ENCODE measurements at regions of chr1 and their contacts with region 1.

Region 1: GRCh38 chr1:235866913-235867845 is 473 bp upstream of the LYST start:
- DNase-seq: peak; percentile 95 to 100 (median 99)
- H3K4me3 ChIP-seq: peak overlapping the region; percentile 72 to 86
- H3K4me3 Mint-ChIP-seq: peak overlapping the region; percentile 77 to 99 (median 96)
- H3K27ac ChIP-seq: peak overlapping the region; percentile 100
- H3K27ac Mint-ChIP-seq: peak overlapping the region; percentile 98 to 100 (median 99)
- H3K4me1 ChIP-seq: peaks cover 31% of the 10 kb centered on the region
- H3K4me1 Mint-ChIP-seq: peaks cover 26 to 60% (median 40%) of the 10 kb centered on the region in 4 donors
- H3K27me3 ChIP-seq: no peaks in the 10 kb centered on the region
- H3K27me3 Mint-ChIP-seq: no peaks in the 10 kb centered on the region

Region 2: DNA sequence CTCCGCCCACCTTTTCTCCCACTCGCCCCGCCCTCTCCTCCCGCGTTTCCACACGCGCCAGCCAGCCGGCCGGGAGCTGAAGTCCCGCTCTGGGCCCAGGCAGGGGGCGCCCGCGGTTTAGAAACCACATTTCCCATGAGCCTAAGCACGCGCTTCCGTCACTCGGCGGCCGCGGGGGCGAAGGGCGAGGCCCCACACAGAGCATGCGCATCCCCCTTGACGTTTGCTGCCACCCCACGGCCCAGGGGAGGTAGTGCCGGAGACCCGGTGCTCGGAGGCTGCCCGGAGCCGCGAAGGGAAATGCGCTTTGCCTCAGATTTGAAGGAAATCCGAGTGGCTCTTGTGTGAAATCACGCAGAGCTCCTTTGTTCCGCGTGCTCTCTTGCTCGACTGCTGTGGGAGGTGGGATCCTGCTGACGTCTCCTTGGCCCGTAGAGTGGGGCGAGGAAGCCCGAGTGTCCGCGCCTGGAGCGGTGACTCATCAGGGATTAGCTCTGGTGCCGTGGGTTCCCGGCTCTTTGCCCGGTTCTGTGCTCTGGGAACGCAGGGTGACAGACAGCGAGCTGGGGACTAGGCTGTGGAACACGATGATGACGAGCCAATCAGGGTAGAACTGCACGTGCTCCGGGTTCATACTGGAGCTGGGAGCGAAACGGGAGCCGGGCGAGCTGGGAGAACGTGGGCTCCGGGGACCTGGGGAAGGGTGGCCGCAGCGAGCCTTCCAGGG is 362.5 kb before region 1 on chr1:
- CTCF ChIA-PET with region 1: interaction called, 4 read pairs
- POLR2A ChIA-PET with region 1: interaction called, 14 read pairs
- intact Hi-C with region 1: loop called (anchors 2 kb)
- DNase-seq: peak; percentile 97 to 99 (median 98)
- H3K4me3 ChIP-seq: peak overlapping the region; percentile 74
- H3K4me3 Mint-ChIP-seq: peak overlapping the region; percentile 92 to 98 (median 96)
- H3K27ac ChIP-seq: peak overlapping the region; percentile 85
- H3K27ac Mint-ChIP-seq: peak overlapping the region; percentile 97 to 100 (median 98)
- H3K4me1 ChIP-seq: peaks cover 20% of the 10 kb centered on the region
- H3K4me1 Mint-ChIP-seq: peaks cover 12 to 32% (median 19%) of the 10 kb centered on the region in 4 donors
- H3K27me3 ChIP-seq: no peaks in the 10 kb centered on the region
- H3K27me3 Mint-ChIP-seq: peaks cover 0 to 1% of the 10 kb centered on the region in 2 donors

Region 3: GRCh38 chr1:235843461-235843961 is 23.7 kb before region 1 on chr1:
- CTCF ChIA-PET with region 1: interaction called, 5 read pairs
- POLR2A ChIA-PET with region 1: interaction called, 16 read pairs
- intact Hi-C with region 1: no loop called
- DNase-seq: peak in 1 of 5 donors; percentile 8
- H3K4me3 ChIP-seq: no peak overlapping the region
- H3K4me3 Mint-ChIP-seq: no peak overlapping the region
- H3K27ac ChIP-seq: no peak overlapping the region
- H3K27ac Mint-ChIP-seq: no peak overlapping the region
- H3K4me1 ChIP-seq: peaks cover 13% of the 10 kb centered on the region
- H3K4me1 Mint-ChIP-seq: peaks cover 37 to 54% (median 41%) of the 10 kb centered on the region in 4 donors
- H3K27me3 ChIP-seq: no peaks in the 10 kb centered on the region
- H3K27me3 Mint-ChIP-seq: no peaks in the 10 kb centered on the region

Region 4: GRCh38 chr1:235888119-235888643 is 21.0 kb after region 1 on chr1:
- CTCF ChIA-PET with region 1: interaction called, 3 read pairs
- POLR2A ChIA-PET with region 1: interaction called, 5 read pairs
- intact Hi-C with region 1: loop called (anchors 2 kb)
- DNase-seq: peak; percentile 43 to 57 (median 51)
- H3K4me3 ChIP-seq: peak overlapping the region in 1 of 2 donors; percentile 51
- H3K4me3 Mint-ChIP-seq: peak overlapping the region; percentile 86 to 94 (median 89)
- H3K27ac ChIP-seq: peak overlapping the region; percentile 66
- H3K27ac Mint-ChIP-seq: peak overlapping the region; percentile 89 to 99 (median 96)
- H3K4me1 ChIP-seq: peaks cover 18% of the 10 kb centered on the region
- H3K4me1 Mint-ChIP-seq: peaks cover 16 to 32% (median 21%) of the 10 kb centered on the region in 4 donors
- H3K27me3 ChIP-seq: no peaks in the 10 kb centered on the region
- H3K27me3 Mint-ChIP-seq: no peaks in the 10 kb centered on the region

Region 5: GRCh38 chr1:235923466-235924021 is 56.4 kb after region 1 on chr1:
- CTCF ChIA-PET with region 1: interaction called, 15 read pairs
- POLR2A ChIA-PET with region 1: interaction called, 33 read pairs
- intact Hi-C with region 1: no loop called
- DNase-seq: peak; percentile 38 to 53 (median 46)
- H3K4me3 ChIP-seq: no peak overlapping the region
- H3K4me3 Mint-ChIP-seq: peak overlapping the region; percentile 32 to 88 (median 74)
- H3K27ac ChIP-seq: no peak overlapping the region
- H3K27ac Mint-ChIP-seq: peak overlapping the region; percentile 78 to 96 (median 91)
- H3K4me1 ChIP-seq: peaks cover 29% of the 10 kb centered on the region
- H3K4me1 Mint-ChIP-seq: peaks cover 27 to 54% (median 38%) of the 10 kb centered on the region in 4 donors
- H3K27me3 ChIP-seq: no peaks in the 10 kb centered on the region
- H3K27me3 Mint-ChIP-seq: no peaks in the 10 kb centered on the region

Region 6: DNA sequence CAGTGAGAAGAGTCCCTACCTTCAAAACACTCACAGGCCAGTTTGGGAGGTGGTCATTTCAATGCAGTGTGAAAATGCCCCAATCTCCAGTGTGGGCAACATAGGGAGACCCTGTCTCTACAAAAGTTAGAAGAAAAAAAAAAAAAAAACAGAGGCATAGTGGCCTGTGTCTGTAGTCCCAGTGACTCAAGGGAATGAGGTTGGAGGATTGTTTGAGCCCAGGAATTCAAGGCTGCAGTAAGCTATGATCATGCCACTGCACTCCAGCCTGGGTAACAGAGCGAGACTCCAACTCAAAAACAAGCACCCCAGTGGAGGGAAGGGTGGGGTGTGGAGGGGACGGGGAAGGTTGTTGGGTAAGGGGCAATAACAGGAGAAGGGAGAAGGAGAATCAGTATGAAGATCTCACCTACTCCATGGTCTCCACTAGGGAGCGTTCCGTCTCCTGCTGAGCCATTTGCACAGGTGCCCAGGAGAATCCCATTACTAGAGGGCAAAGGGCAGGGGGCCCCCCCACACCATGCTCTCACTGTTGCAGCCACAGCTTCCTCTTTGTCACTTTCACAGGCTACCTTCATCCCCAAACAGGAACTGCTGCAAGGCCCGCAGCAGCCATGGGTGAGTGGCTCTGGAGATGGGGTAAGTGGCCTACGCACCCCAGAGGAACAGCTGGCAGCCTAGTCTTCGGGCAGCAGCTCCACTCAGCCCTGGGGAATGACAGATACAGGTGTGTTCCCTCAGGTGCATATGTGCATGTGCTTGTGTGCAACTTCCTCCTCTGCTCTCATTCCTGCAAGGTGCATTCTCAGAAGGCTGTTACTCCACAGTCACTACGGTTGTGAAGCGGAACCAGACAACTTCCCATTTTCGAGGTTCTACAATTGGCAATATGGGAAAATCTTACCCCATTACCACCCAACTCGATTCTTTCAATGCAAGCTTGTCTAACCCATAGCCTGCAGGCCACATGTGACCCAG is 87.4 kb after region 1 on chr1:
- CTCF ChIA-PET with region 1: interaction called, 11 read pairs
- POLR2A ChIA-PET with region 1: interaction called, 6 read pairs
- intact Hi-C with region 1: loop called (anchors 5 kb)
- DNase-seq: peak; percentile 34 to 65 (median 43)
- H3K4me3 ChIP-seq: no peak overlapping the region
- H3K4me3 Mint-ChIP-seq: peak overlapping the region; percentile 15 to 69 (median 52)
- H3K27ac ChIP-seq: no peak overlapping the region
- H3K27ac Mint-ChIP-seq: peak overlapping the region; percentile 67 to 85 (median 79)
- H3K4me1 ChIP-seq: peaks cover 34% of the 10 kb centered on the region
- H3K4me1 Mint-ChIP-seq: peaks cover 33 to 39% (median 36%) of the 10 kb centered on the region in 4 donors
- H3K27me3 ChIP-seq: no peaks in the 10 kb centered on the region
- H3K27me3 Mint-ChIP-seq: no peaks in the 10 kb centered on the region

Region 7: DNA sequence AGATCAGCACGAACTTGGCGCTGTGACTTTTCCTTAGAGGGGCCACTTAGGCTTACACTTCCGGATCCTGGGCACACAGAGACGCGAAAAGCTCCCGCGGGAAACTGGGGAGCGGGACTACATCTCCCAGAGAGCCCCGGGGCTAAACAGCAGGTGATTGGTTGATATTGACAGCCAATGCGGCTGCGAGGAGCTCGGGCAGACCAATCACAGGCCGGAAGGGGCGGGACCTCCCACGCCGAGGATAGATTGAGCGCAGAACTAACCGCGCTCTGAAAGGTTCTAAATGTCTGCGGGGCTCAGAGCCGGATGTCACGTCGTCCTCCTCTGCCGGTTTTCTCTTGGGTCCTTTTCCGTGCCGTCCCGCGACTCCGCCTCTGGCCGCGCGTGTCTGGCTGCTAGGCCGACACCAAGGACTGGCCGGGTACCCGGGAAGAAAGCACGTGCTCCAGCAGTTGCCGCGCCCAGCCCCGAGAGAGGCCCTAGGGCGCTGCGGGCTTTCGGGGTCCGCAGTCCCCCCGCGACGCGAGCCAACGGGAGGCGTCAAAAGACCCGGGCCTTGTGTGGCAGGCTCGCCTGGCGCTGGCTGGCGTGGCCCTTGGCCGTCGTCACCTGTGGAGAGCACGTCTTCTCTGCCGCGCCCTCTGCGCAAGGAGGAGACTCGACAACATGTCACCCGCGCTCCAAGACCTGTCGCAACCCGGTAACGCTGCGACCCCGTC is 928.0 kb after region 1 on chr1 and contains the start of gene MTR:
- CTCF ChIA-PET with region 1: no interaction called
- POLR2A ChIA-PET with region 1: interaction called, 3 read pairs
- intact Hi-C with region 1: loop called (anchors 5 kb)
- DNase-seq: peak; percentile 95 to 98 (median 95)
- H3K4me3 ChIP-seq: peak within 1 kb of the TSS; percentile 83 to 97
- H3K4me3 Mint-ChIP-seq: peak within 1 kb of the TSS; percentile 92 to 98 (median 96)
- H3K27ac ChIP-seq: peak within 1 kb of the TSS; percentile 99
- H3K27ac Mint-ChIP-seq: peak within 1 kb of the TSS; percentile 95 to 99 (median 98)
- H3K4me1 ChIP-seq: peaks cover 39% of the 10 kb centered on the region
- H3K4me1 Mint-ChIP-seq: peaks cover 25 to 49% (median 31%) of the 10 kb centered on the region in 4 donors
- H3K27me3 ChIP-seq: no peaks in the 10 kb centered on the region
- H3K27me3 Mint-ChIP-seq: peaks cover 1 to 5% of the 10 kb centered on the region in 2 donors
- total RNA-seq, gene MTR: 68.4 to 71.0 TPM